Naive thymus-derived CD4-positive, alpha-beta T cell (primary cell): ENCODE measurements at regions of chr13 and their contacts with region 1.

Region 1: DNA sequence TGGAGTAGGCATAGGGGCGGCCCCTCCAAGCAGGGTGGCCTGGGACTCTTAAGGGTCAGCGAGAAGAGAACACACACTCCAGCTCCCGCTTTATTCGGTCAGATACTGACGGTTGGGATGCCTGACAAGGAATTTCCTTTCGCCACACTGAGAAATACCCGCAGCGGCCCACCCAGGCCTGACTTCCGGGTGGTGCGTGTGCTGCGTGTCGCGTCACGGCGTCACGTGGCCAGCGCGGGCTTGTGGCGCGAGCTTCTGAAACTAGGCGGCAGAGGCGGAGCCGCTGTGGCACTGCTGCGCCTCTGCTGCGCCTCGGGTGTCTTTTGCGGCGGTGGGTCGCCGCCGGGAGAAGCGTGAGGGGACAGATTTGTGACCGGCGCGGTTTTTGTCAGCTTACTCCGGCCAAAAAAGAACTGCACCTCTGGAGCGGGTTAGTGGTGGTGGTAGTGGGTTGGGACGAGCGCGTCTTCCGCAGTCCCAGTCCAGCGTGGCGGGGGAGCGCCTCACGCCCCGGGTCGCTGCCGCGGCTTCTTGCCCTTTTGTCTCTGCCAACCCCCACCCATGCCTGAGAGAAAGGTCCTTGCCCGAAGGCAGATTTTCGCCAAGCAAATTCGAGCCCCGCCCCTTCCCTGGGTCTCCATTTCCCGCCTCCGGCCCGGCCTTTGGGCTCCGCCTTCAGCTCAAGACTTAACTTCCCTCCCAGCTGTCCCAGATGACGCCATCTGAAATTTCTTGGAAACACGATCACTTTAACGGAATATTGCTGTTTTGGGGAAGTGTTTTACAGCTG is at the starts of genes BRCA2 and ZAR1L:
- DNase-seq: peak; percentile 79 to 90 (median 86)
- ATAC-seq: peak; percentile 94
- H3K4me3 ChIP-seq: peak within 1 kb of the TSS; percentile 94
- H3K4me3 Mint-ChIP-seq: peak within 1 kb of the TSS; percentile 92 to 98 (median 96)
- H3K27ac ChIP-seq: peak within 1 kb of the TSS; percentile 99
- H3K27ac Mint-ChIP-seq: peak within 1 kb of the TSS; percentile 98 to 100 (median 100)
- H3K4me1 ChIP-seq: peaks cover 7 to 8% of the 10 kb centered on the region in 2 donors
- H3K4me1 Mint-ChIP-seq: peaks cover 5 to 43% (median 9%) of the 10 kb centered on the region in 7 donors
- H3K27me3 ChIP-seq: no peaks in the 10 kb centered on the region
- H3K27me3 Mint-ChIP-seq: no peaks in the 10 kb centered on the region
- total RNA-seq, gene BRCA2: 3.2 to 19.9 (median 4.3) TPM
- total RNA-seq, gene ZAR1L: not detected

Region 2: DNA sequence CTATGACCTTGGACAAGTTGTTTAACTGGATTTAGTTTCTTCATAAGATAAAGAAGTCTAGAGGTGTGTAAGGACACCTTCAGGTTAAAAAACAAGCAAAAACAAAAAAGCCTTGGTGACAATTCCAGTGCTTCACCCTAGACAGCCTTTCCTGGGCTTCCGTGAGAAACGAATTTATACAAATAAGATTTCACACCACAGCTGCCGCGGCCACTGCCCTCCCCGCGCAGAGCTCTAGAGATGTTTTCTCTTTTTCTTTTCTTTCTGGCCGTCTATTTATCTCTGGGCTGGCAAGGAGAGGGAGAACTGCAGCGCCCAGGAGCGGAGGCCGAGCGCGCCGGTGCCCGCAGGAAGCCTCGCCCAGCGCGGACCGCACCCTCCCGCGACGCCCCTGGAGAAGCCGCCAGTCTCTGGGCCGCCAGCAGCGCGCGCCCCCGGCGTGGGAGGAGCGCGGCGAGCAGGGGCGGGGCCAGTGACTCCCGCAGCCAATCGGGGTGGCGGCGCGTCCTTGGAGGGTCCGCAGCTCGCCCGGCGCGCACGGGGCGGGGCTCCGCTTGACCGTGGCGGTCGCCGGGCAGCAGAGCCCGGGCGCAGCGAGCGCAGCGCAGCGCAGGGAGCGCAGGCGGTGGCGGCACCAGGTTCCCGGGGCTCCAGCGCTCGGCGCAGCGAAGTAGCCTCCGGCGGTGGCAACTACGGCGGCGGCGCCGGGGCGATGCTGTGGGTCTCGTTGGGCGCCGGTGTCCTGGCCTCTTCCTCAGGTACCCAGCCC is 469.1 kb before region 1 on chr13:
- CTCF ChIA-PET with region 1: no interaction called
- POLR2A ChIA-PET with region 1: no interaction called
- intact Hi-C with region 1: loop called in 1 of 2 experiments (anchors 1 kb)
- DNase-seq: peak in 7 of 9 donors; percentile 1 to 86 (median 14)
- ATAC-seq: peak; percentile 96
- H3K4me3 ChIP-seq: no peak overlapping the region
- H3K4me3 Mint-ChIP-seq: peak overlapping the region; percentile 47 to 91 (median 74)
- H3K27ac ChIP-seq: no peak overlapping the region
- H3K27ac Mint-ChIP-seq: peak overlapping the region in 1 of 9 donors; percentile 43
- H3K4me1 ChIP-seq: no peaks in the 10 kb centered on the region
- H3K4me1 Mint-ChIP-seq: peaks cover 0 to 19% (median 11%) of the 10 kb centered on the region in 7 donors
- H3K27me3 ChIP-seq: peaks cover 0 to 6% of the 10 kb centered on the region in 2 donors
- H3K27me3 Mint-ChIP-seq: peaks cover 23 to 75% (median 64%) of the 10 kb centered on the region in 5 donors

Region 3: GRCh38 chr13:32261567-32261966 is 53.9 kb before region 1 on chr13:
- CTCF ChIA-PET with region 1: no interaction called
- POLR2A ChIA-PET with region 1: no interaction called
- intact Hi-C with region 1: no loop called
- DNase-seq: no peak
- ATAC-seq: no peak
- H3K4me3 ChIP-seq: no peak overlapping the region
- H3K4me3 Mint-ChIP-seq: no peak overlapping the region
- H3K27ac ChIP-seq: no peak overlapping the region
- H3K27ac Mint-ChIP-seq: no peak overlapping the region
- H3K4me1 ChIP-seq: no peaks in the 10 kb centered on the region
- H3K4me1 Mint-ChIP-seq: no peaks in the 10 kb centered on the region
- H3K27me3 ChIP-seq: no peaks in the 10 kb centered on the region
- H3K27me3 Mint-ChIP-seq: peaks cover 0 to 4% (median 0%) of the 10 kb centered on the region in 5 donors

Region 4: GRCh38 chr13:32427852-32428580 is 112.6 kb after region 1 on chr13 and contains the start of gene N4BP2L1:
- CTCF ChIA-PET with region 1: no interaction called
- POLR2A ChIA-PET with region 1: interaction called, 55 read pairs
- intact Hi-C with region 1: loop called (anchors 1 kb)
- DNase-seq: peak; percentile 60 to 91 (median 78)
- ATAC-seq: peak; percentile 81
- H3K4me3 ChIP-seq: peak within 1 kb of the TSS; percentile 64
- H3K4me3 Mint-ChIP-seq: peak within 1 kb of the TSS; percentile 90 to 100 (median 94)
- H3K27ac ChIP-seq: peak within 1 kb of the TSS; percentile 98
- H3K27ac Mint-ChIP-seq: peak within 1 kb of the TSS; percentile 95 to 99 (median 97)
- H3K4me1 ChIP-seq: peaks cover 19 to 20% of the 10 kb centered on the region in 2 donors
- H3K4me1 Mint-ChIP-seq: peaks cover 34 to 50% (median 48%) of the 10 kb centered on the region in 7 donors
- H3K27me3 ChIP-seq: no peaks in the 10 kb centered on the region
- H3K27me3 Mint-ChIP-seq: no peaks in the 10 kb centered on the region
- total RNA-seq, gene N4BP2L1: 30.4 to 58.0 (median 47.1) TPM

Region 5: DNA sequence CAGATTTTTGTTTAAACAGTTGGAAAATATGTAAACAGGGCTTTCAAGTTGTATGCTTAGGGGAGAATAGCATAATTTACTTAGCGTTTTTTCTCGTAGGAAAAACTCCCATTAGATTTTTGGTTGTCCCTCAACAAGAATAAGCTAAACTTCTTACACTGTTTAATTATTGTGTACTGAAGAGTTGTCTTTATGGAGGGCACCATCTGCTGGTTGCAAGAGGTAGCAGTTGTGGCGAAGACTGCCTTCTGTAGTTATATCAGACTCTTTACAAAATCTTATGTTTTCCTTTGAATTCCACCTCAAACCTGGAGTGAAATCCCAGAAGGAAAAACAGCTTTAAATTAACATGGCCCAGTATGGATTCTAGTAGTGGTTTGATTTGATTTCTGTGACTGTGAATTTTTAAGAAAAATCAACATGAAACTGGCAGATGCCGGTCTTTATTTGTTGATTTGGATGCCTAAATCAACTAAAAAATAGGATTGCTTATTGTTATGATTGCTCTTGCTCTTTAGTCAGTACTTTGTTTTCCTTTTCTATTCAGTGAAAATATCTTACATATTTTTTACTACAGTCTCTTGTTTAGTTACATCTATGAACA is 324.2 kb after region 1 on chr13:
- CTCF ChIA-PET with region 1: no interaction called
- POLR2A ChIA-PET with region 1: no interaction called
- intact Hi-C with region 1: loop called in 1 of 2 experiments (anchors 2 kb)
- DNase-seq: peak in 7 of 9 donors; percentile 40 to 60 (median 53)
- ATAC-seq: peak; percentile 95
- H3K4me3 ChIP-seq: no peak overlapping the region
- H3K4me3 Mint-ChIP-seq: no peak overlapping the region
- H3K27ac ChIP-seq: no peak overlapping the region
- H3K27ac Mint-ChIP-seq: no peak overlapping the region
- H3K4me1 ChIP-seq: peaks cover 0 to 12% of the 10 kb centered on the region in 2 donors
- H3K4me1 Mint-ChIP-seq: peaks cover 11 to 43% (median 32%) of the 10 kb centered on the region in 7 donors
- H3K27me3 ChIP-seq: no peaks in the 10 kb centered on the region
- H3K27me3 Mint-ChIP-seq: no peaks in the 10 kb centered on the region

Region 6: DNA sequence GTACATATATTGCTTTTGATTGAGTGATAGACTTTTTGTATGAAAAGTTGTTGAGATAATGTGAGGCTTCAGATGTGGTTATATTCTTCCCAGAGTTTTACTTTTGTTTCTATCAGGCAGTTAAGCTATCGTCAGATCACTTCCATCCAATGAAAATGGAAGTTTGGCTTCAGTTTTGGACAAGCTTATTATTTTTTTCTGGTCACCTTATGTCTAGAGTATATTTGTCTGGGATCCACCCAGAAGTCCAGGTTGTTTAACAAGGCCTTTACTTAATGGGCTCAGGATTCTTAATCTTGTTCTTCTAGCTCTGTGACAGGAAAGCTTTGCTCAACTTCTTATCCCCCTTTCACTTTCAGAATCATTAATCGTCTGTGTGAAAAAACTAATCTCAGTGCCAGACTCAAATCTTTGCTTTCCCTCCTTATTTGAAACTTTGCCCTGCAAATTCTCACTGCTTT is 421.7 kb after region 1 on chr13:
- CTCF ChIA-PET with region 1: no interaction called
- POLR2A ChIA-PET with region 1: no interaction called
- intact Hi-C with region 1: loop called in 1 of 2 experiments (anchors 5 kb)
- DNase-seq: peak in 7 of 9 donors; percentile 38 to 66 (median 59)
- ATAC-seq: peak; percentile 88
- H3K4me3 ChIP-seq: peak overlapping the region; percentile 28
- H3K4me3 Mint-ChIP-seq: peak overlapping the region; percentile 58 to 93 (median 86)
- H3K27ac ChIP-seq: peak overlapping the region; percentile 77
- H3K27ac Mint-ChIP-seq: peak overlapping the region; percentile 87 to 98 (median 94)
- H3K4me1 ChIP-seq: peaks cover 8 to 22% of the 10 kb centered on the region in 2 donors
- H3K4me1 Mint-ChIP-seq: peaks cover 17 to 64% (median 51%) of the 10 kb centered on the region in 7 donors
- H3K27me3 ChIP-seq: no peaks in the 10 kb centered on the region
- H3K27me3 Mint-ChIP-seq: no peaks in the 10 kb centered on the region